Activated CD8-positive, alpha-beta T cell treated with anti-CD3 and anti-CD28 coated beads, Interleukin-2, amount 10 ng/mL, durations not matched to agents 7 days and 5 days (primary cell): ENCODE measurements at regions of chr9 and their contacts with region 1.

Region 1: GRCh38 chr9:76302947-76303940 is 91.0 kb downstream of the RFK start:
- DNase-seq: peak; percentile 35
- ATAC-seq: peak; percentile 39
- H3K4me3 Mint-ChIP-seq: no peak overlapping the region
- H3K27ac Mint-ChIP-seq: no peak overlapping the region
- H3K4me1 Mint-ChIP-seq: no peaks in the 10 kb centered on the region
- H3K27me3 Mint-ChIP-seq: peaks cover 5% of the 10 kb centered on the region

Region 2: GRCh38 chr9:75866273-75866871 is 436.9 kb before region 1 on chr9:
- CTCF ChIA-PET with region 1: interaction called, 13 read pairs
- POLR2A ChIA-PET with region 1: interaction called, 3 read pairs
- DNase-seq: peak; percentile 67
- ATAC-seq: no peak
- H3K4me3 Mint-ChIP-seq: no peak overlapping the region
- H3K27ac Mint-ChIP-seq: no peak overlapping the region
- H3K4me1 Mint-ChIP-seq: no peaks in the 10 kb centered on the region
- H3K27me3 Mint-ChIP-seq: peaks cover 5% of the 10 kb centered on the region